SK-N-SH (cell line): ENCODE measurements at regions of chr17 and their contacts with region 1.

Region 1: DNA sequence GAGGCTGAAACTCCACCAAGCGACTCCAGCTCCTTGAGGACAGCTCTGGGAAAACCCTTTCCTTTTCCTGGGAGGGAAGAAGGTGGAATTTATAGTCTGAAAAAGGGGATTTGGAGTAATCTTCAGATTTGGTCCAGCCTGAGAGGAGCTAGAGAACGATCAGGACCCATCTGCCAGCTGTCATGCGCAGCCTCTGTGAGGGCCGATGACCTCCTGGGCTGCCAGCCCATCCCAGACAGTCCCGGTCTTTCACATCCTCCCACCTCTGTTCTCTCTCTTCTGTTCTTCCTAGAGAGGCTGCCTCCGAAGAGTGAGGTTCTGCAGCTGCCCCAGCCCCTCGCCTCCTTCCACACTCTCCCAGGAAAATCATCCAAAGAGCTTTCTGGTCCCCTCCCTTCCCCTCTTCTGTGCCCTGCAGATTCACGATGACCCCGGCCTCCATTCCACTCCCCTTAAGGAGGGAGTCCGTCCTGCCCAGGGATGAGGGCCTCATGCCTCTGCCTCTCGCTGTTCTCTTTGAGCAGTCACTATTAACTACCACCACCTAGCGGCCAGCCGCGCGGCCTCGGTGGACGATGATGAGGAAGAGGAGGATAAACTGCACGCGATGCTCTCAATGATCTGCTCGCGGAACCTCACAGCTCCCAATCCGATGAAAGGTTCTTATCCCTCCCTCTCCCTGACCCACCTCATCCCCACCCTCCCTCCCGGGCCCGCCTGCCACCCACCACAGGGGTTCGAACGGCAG is 29.6 kb downstream of the SGSM2 start:
- DNase-seq: no peak
- H3K4me3 ChIP-seq: no peak overlapping the region
- H3K27ac ChIP-seq: no peak overlapping the region
- H3K4me1 ChIP-seq: no peaks in the 10 kb centered on the region; a peak in 1 of 4 replicates
- H3K27me3 ChIP-seq: no peaks in the 10 kb centered on the region
- CTCF ChIP-seq: no peak
- EP300 ChIP-seq: no peak
- RAD21 ChIP-seq: no peak

Region 2: GRCh38 chr17:2347547-2348307 is 19.2 kb before region 1 on chr17:
- CTCF ChIA-PET with region 1: interaction called, 88 read pairs
- POLR2A ChIA-PET with region 1: no interaction called
- DNase-seq: no peak
- H3K4me3 ChIP-seq: no peak overlapping the region
- H3K27ac ChIP-seq: peak overlapping the region; percentile 41 to 44; a peak in 3 of 4 replicates
- H3K4me1 ChIP-seq: peaks cover 6 to 10% of the 10 kb centered on the region in 2 experiments; a peak in 2 of 4 replicates
- H3K27me3 ChIP-seq: no peaks in the 10 kb centered on the region
- CTCF ChIP-seq: no peak
- EP300 ChIP-seq: no peak
- RAD21 ChIP-seq: no peak

Region 3: DNA sequence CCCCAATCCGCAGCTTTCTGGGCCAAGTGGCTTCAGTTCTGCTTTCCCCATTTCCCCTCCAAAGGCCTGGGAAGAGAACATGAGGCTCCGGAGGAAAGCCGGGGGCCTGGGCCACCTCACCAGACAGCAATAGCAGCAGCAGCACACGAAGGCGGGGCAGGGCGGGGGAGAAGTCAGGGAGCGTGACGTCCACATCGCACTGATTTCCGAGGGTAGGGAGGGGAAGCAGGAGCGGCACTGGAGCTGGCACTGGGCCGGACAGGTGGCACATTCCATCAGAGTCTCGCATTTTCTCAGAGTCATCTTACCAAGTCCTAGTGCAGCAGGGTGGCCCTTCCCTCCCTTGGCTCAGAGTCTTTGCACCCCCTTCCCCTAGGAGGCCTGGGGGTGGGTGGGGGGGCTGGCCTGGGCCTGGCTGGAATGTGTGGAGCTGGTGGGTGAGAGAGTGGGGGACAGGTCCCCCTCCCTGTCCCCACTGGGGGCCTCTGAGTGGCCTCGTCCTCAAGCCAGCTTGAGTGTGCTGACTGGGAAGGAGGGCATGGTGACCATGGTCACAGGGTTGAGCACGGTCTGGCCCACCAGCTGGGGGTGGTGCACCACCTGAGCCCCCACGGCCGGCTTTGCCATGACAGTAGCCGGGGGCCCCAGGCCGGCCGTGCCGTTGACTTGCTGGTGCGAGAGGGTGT is 19.6 kb after region 1 on chr17:
- CTCF ChIA-PET with region 1: interaction called, 59 read pairs
- POLR2A ChIA-PET with region 1: no interaction called
- DNase-seq: peak; percentile 10
- H3K4me3 ChIP-seq: no peak overlapping the region
- H3K27ac ChIP-seq: no peak overlapping the region; a peak in 1 of 4 replicates
- H3K4me1 ChIP-seq: peaks cover 0 to 44% of the 10 kb centered on the region in 2 experiments; a peak in 1 of 4 replicates
- H3K27me3 ChIP-seq: no peaks in the 10 kb centered on the region
- CTCF ChIP-seq: no peak
- EP300 ChIP-seq: no peak
- RAD21 ChIP-seq: no peak

Region 4: DNA sequence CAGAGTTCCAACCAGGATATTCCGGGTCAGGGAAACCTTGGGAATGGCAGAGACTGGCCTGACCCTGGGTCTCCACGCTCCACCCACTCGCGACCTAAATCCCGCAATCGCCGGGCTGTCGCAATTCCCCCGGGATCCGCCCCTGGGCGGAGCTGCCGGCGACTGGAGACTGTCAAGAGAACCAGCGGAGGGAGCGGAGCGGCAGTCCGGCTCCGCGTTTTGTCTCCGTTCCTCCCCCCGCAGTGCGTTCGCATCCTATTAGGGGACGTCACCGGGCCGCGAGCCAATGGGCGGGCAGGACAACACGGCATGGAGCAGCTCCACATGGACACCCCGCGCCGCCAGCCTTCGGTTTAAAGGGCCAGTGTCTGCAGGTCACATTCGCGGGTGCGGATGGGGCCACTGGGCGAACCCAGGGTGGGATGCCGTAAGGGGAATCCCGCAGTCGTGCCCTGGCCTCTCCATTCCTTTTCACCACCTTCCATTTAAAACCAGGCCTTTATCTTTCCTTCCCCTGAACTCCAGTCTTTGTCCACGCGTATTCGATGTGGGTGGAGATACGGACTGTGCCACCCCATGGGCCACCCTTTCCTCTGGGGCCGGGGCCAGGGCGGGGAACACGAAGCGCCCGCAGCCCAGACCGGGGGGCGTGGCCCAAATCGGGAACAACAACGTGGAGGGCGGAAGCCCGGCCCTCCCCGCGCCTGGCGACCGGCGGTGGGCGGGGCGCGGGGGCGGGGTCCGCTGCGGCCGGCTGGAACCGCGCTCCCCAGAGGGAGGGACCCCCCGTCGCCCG is 34.7 kb after region 1 on chr17:
- CTCF ChIA-PET with region 1: interaction called, 654 read pairs
- POLR2A ChIA-PET with region 1: no interaction called
- DNase-seq: peak; percentile 93
- H3K4me3 ChIP-seq: peak overlapping the region; percentile 99
- H3K27ac ChIP-seq: peak overlapping the region; percentile 98 to 100
- H3K4me1 ChIP-seq: peaks cover 35 to 42% of the 10 kb centered on the region in 2 experiments
- H3K27me3 ChIP-seq: no peaks in the 10 kb centered on the region
- CTCF ChIP-seq: no peak
- EP300 ChIP-seq: no peak
- RAD21 ChIP-seq: no peak